Activated T-helper 1 cell treated with anti-CD3 and anti-CD28 coated beads, Interleukin-12 subunit alpha, Interleukin-12 subunit beta, Interleukin-2, Interleukin-4 antibody, amounts not matched to agents 30 ng/mL and 10 ng/mL and 1 ng/mL, durations not matched to agents 14 hours and 24 hours and 36 hours (primary cell): ENCODE measurements at regions of chr20 and their contacts with region 1.

Region 1: GRCh38 chr20:34834459-34834893 is 9.0 kb upstream of the NCOA6 start:
- DNase-seq: no peak
- H3K4me3 Mint-ChIP-seq: no peak overlapping the region
- H3K27ac Mint-ChIP-seq: no peak overlapping the region
- H3K4me1 Mint-ChIP-seq: no peaks in the 10 kb centered on the region
- H3K27me3 Mint-ChIP-seq: peaks cover 27% of the 10 kb centered on the region

Region 2: DNA sequence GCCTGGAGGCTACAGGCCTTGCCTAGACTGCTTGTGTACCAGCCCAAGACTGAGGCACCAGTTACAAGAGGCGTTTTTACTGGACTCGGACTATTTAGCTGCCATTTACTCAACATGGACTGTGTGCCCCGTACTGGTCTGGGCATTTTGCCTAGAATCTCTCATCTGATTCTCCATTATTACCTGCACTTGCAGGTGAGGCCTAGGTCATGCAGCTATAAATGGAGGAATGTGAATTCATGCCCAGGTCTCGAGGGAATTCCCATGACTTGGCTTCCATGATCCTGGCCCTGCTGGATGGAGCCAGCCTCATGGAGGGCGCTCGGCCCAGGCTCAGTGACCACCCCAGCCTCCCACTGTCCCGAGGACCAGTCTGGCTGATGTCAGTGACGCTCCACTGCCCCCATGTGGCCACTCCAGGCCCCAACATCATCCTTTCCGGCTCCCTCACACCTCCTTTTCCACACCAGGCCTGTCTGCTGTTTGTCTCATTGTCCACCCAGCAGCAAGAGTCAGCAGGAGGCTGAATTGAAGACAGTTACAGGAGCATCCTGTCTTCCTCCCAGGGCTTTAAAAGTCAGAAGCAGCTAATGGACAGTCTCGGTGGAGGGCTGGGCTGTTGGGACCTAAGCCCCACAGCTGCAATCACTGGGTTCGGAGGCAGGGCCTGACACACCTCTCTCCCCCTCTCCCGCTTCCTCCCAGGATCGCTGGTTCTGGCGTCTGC is 434.7 kb after region 1 on chr20:
- intact Hi-C with region 1: loop called (anchors 2 kb)
- DNase-seq: peak; percentile 36
- H3K4me3 Mint-ChIP-seq: no peak overlapping the region
- H3K27ac Mint-ChIP-seq: no peak overlapping the region
- H3K4me1 Mint-ChIP-seq: no peaks in the 10 kb centered on the region
- H3K27me3 Mint-ChIP-seq: no peaks in the 10 kb centered on the region

Region 3: GRCh38 chr20:35680452-35681183 is 846.1 kb after region 1 on chr20:
- intact Hi-C with region 1: no loop called
- DNase-seq: no peak
- H3K4me3 Mint-ChIP-seq: no peak overlapping the region
- H3K27ac Mint-ChIP-seq: no peak overlapping the region
- H3K4me1 Mint-ChIP-seq: no peaks in the 10 kb centered on the region
- H3K27me3 Mint-ChIP-seq: no peaks in the 10 kb centered on the region